OCI-LY7 (cell line): ENCODE measurements at regions of chr6 and their contacts with region 1.

Region 1: DNA sequence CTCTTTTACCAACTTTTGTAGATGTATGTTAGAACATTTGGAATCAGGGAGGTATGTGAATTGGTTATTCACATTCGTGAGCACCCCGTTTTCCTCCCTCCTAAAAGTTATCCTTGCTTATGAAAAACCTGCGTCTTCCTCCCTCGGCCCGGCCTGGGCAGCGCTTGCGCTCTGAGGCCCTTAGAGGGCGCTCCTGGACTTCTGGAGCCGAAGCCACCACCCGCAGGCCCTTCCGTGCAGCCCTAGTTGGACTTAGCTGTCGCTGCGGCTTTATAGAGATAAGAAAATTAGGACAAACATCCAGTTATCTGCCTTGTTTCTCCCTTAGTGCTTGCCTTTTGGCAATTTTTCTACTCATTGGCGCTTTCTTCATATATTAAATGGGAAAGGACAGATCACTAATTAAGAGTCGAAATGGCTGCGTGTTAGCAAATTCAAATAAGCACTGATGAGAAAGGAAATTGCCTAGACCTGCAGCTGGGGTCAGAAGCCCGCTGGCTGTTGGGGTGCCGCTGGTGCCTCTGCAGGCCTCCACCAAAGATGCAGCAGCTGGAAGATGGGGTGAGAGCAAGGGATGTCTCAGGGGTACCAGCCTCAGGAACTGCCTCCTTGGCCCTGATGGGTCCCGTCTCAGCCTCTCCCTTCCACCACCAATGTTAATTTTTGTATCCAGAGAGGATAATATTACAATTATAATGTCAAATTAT is 5.2 kb downstream of the FNDC1 start:
- DNase-seq: peak; percentile 87
- H3K4me3 ChIP-seq: no peak overlapping the region
- H3K27ac ChIP-seq: no peak overlapping the region
- H3K4me1 ChIP-seq: peaks cover 4% of the 10 kb centered on the region
- CTCF ChIP-seq: peak; percentile 100

Region 2: DNA sequence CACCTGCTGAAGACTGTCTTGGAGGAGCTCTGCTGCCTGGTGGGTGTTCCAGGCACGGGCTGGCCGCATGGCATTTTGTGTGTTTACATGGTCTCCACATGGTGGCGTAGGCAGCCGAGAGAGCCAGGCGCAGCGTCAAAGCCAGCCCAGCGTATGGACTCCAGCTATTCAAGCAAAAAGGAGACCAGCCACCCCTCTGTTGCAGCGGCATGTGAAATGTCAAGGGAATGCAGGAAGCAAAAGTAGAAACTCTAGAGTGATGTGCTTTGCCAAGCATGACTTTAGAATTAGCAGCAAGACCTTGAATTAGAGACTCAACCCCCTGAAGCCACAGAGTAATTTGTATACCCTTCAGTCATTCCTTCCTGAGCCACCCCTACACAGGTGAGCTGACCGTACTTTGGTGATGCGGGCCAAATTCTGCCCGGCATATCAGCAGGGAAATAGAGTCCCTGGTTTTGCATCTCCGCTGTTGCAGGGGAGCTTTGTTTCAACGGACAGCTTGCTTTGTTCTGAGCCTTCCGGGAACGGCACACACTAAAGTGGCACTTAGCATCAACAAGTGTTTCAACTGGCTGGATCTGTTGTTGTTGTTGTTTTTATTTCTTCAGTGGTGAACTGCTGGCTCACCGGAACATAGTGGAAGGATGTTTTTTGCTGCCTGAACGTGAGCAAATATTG is 43.3 kb after region 1 on chr6:
- CTCF ChIA-PET with region 1: interaction called, 5 read pairs
- POLR2A ChIA-PET with region 1: interaction called, 5 read pairs
- intact Hi-C with region 1: loop called (anchors 1 kb)
- DNase-seq: peak; percentile 93
- H3K4me3 ChIP-seq: peak overlapping the region; percentile 60
- H3K27ac ChIP-seq: peak overlapping the region; percentile 87
- H3K4me1 ChIP-seq: peaks cover 77% of the 10 kb centered on the region
- CTCF ChIP-seq: peak; percentile 90

Region 3: DNA sequence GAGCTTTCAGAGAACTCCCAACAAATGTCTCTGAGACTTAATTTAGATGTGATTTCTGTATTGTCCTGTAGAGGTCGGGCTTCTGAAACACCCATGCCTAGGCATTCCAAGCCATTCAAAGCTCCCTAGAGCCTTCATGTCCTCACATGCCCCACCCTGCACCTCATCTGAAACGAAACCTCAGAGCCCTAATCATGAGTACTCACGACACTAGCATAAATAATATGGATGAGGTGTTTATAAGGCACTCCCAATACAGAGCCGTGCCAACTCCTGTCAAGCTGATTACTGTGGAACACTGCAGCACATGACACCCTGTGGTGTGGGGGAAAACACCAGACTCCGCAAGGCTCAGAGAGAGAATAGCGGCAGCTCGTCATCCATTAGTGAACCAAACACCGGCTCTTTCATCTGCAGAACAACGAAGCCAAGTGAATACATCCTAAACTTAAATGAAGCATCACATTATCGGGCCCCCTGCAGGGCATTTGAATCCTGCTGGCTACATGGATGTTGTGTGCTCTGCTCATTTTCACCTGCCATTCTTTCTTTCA is 78.6 kb after region 1 on chr6:
- CTCF ChIA-PET with region 1: no interaction called
- POLR2A ChIA-PET with region 1: no interaction called
- intact Hi-C with region 1: loop called (anchors 5 kb)
- DNase-seq: peak; percentile 68
- H3K4me3 ChIP-seq: no peak overlapping the region
- H3K27ac ChIP-seq: no peak overlapping the region
- H3K4me1 ChIP-seq: peaks cover 4% of the 10 kb centered on the region
- CTCF ChIP-seq: peak; percentile 85

Region 4: GRCh38 chr6:159298840-159299239 is 124.4 kb after region 1 on chr6:
- CTCF ChIA-PET with region 1: no interaction called
- POLR2A ChIA-PET with region 1: no interaction called
- intact Hi-C with region 1: loop called (anchors 5 kb)
- DNase-seq: no peak
- H3K4me3 ChIP-seq: no peak overlapping the region
- H3K27ac ChIP-seq: no peak overlapping the region
- H3K4me1 ChIP-seq: no peaks in the 10 kb centered on the region
- CTCF ChIP-seq: peak; percentile 43

Region 5: GRCh38 chr6:159608961-159609651 is 434.7 kb after region 1 on chr6:
- CTCF ChIA-PET with region 1: interaction called, 4 read pairs
- POLR2A ChIA-PET with region 1: no interaction called
- intact Hi-C with region 1: loop called (anchors 1 kb)
- DNase-seq: peak; percentile 66
- H3K4me3 ChIP-seq: no peak overlapping the region
- H3K27ac ChIP-seq: no peak overlapping the region
- H3K4me1 ChIP-seq: no peaks in the 10 kb centered on the region
- CTCF ChIP-seq: peak; percentile 93

Region 6: GRCh38 chr6:159654483-159655098 is 480.2 kb after region 1 on chr6:
- CTCF ChIA-PET with region 1: no interaction called
- POLR2A ChIA-PET with region 1: interaction called, 6 read pairs
- intact Hi-C with region 1: loop called (anchors 2 kb)
- DNase-seq: peak; percentile 86
- H3K4me3 ChIP-seq: no peak overlapping the region
- H3K27ac ChIP-seq: no peak overlapping the region
- H3K4me1 ChIP-seq: no peaks in the 10 kb centered on the region
- CTCF ChIP-seq: peak; percentile 93